ENCODE measurements at regions of chr9 and their contacts with region 1.

Region 1: GRCh38 chr9:84397151-84397728 is 56.7 kb upstream of the SLC28A3 start:
- DNase-seq: peak; percentile 34 to 66
- ATAC-seq: peak; percentile 83

Region 2: GRCh38 chr9:84953797-84954705 is 556.8 kb after region 1 on chr9:
- intact Hi-C with region 1: loop called in 1 of 2 experiments (anchors 10 kb)
- DNase-seq: peak; percentile 77 to 79
- ATAC-seq: peak; percentile 93

Region 3: DNA sequence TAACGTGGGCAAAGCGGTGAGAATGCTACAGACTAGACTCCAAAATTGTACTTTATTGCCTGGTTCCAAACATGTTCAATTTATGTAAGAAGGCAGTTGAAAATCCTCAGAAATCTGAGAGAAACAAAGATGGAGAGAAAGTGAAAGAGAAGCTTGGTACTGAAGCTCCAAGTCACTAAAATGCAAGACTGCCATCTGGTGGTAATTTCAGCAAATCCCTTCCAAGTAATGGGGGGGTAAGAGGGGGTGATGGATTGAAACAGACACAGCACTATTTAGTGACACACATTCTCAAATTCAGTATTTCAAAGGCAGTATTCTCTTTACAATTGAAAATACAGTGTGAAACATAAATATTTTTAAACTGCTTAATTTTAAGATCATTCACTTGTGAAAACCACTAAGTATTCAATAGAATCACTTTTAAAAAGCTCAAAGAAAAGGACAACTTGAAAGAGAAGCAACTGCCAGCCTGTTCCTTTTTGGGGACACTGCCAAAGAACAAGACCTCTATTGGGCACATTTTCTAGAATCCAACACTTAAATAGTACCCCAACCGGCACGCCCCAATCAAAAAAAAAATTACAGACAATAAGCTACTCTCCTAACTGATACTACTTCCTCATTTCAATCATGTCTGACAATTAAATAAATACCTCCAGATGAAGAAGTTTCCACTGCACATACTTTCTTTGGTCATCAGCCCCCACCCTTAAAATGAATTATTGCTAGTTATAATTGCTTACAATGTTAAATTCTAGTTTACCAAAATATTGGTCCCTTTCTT is 1213.0 kb after region 1 on chr9:
- intact Hi-C with region 1: loop called in 1 of 2 experiments (anchors 5 kb)
- DNase-seq: no peak
- ATAC-seq: peak; percentile 77